ENCODE measurements at regions of chr7 and their contacts with region 1.

Region 1: DNA sequence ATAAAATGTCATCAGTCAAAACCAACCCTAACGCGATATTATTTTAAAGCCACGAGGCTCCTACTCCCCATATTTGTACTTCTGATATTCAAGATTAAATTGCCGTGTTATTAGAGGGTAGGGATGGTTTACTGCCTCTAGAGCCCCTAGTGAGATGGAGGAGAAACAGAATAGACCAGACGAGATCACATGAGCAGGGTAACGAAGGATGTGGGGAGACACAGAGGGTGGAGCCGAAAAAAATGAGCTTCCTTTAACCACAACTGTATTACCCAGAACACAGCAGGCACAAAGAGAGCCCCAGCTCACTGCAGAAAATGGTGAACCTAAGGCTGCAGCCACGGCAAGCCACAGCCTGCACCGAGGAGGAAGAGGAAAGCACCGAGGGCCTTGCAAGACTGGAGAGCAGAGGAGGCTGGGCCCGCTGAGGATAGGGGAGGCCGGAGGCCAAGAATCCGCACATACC is 14.3 kb downstream of the ZC3HAV1 start:
- DNase-seq: peak; percentile 57 to 96 (median 82)
- ATAC-seq: peak; percentile 84
- H3K4me3 ChIP-seq: peak overlapping the region; percentile 34 to 53
- H3K4me3 Mint-ChIP-seq: peak overlapping the region; percentile 84
- H3K27ac ChIP-seq: peak overlapping the region; percentile 61 to 76
- H3K27ac Mint-ChIP-seq: peak overlapping the region; percentile 95
- H3K4me1 ChIP-seq: peaks cover 82% of the 10 kb centered on the region
- H3K4me1 Mint-ChIP-seq: peaks cover 86% of the 10 kb centered on the region
- H3K27me3 ChIP-seq: no peaks in the 10 kb centered on the region
- H3K27me3 Mint-ChIP-seq: no peaks in the 10 kb centered on the region
- CTCF ChIP-seq: no peak

Region 2: GRCh38 chr7:139109188-139109982 is 14.2 kb after region 1 on chr7 and contains the start of gene ZC3HAV1:
- CTCF ChIA-PET with region 1: interaction called, 25 read pairs
- POLR2A ChIA-PET with region 1: interaction called, 93 read pairs
- intact Hi-C with region 1: loop called (anchors 1 to 2 kb)
- DNase-seq: peak; percentile 78 to 97 (median 89)
- ATAC-seq: peak; percentile 87
- H3K4me3 ChIP-seq: peak within 1 kb of the TSS; percentile 81 to 99
- H3K4me3 Mint-ChIP-seq: peak within 1 kb of the TSS; percentile 96
- H3K27ac ChIP-seq: peak within 1 kb of the TSS; percentile 97 to 98
- H3K27ac Mint-ChIP-seq: peak within 1 kb of the TSS; percentile 99
- H3K4me1 ChIP-seq: peaks cover 18% of the 10 kb centered on the region
- H3K4me1 Mint-ChIP-seq: peaks cover 42% of the 10 kb centered on the region
- H3K27me3 ChIP-seq: no peaks in the 10 kb centered on the region
- H3K27me3 Mint-ChIP-seq: no peaks in the 10 kb centered on the region
- CTCF ChIP-seq: no peak
- total RNA-seq, gene ZC3HAV1: 194 to 198 TPM

Region 3: DNA sequence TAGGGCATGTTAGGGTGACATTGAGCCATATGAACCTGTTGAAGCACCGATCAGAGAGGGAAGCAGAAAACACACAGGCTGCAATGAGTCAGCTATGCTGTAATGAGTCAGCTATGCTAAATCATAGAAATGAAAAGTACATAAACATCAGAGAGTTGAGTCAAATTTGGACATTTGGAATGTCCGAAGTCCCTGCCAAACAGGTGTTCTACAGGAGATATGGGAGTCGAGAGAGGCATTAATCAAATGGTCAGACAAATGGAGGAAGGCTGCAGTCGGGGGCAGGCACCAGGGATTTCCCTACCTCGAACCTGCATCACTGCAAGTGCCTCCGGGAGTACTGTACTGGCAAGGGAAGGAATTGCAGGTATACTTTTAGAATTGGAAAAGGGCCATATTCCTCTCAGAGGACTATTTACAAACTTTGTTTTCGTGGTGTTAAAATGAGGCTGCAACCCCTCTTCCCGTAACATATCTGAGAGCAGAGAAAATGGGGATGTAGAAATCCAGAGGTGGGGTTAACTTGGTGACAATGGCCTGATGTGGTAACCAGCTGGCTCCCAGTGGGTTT is 23.1 kb after region 1 on chr7:
- CTCF ChIA-PET with region 1: interaction called, 7 read pairs
- POLR2A ChIA-PET with region 1: interaction called, 13 read pairs
- intact Hi-C with region 1: no loop called
- DNase-seq: peak in 1 of 9 experiments; percentile 21
- ATAC-seq: no peak
- H3K4me3 ChIP-seq: peak overlapping the region in 1 of 2 experiments; percentile 33
- H3K4me3 Mint-ChIP-seq: peak overlapping the region; percentile 43
- H3K27ac ChIP-seq: peak overlapping the region in 1 of 2 experiments; percentile 38
- H3K27ac Mint-ChIP-seq: peak overlapping the region; percentile 88
- H3K4me1 ChIP-seq: peaks cover 27% of the 10 kb centered on the region
- H3K4me1 Mint-ChIP-seq: peaks cover 36% of the 10 kb centered on the region
- H3K27me3 ChIP-seq: no peaks in the 10 kb centered on the region
- H3K27me3 Mint-ChIP-seq: no peaks in the 10 kb centered on the region
- CTCF ChIP-seq: no peak

Region 4: DNA sequence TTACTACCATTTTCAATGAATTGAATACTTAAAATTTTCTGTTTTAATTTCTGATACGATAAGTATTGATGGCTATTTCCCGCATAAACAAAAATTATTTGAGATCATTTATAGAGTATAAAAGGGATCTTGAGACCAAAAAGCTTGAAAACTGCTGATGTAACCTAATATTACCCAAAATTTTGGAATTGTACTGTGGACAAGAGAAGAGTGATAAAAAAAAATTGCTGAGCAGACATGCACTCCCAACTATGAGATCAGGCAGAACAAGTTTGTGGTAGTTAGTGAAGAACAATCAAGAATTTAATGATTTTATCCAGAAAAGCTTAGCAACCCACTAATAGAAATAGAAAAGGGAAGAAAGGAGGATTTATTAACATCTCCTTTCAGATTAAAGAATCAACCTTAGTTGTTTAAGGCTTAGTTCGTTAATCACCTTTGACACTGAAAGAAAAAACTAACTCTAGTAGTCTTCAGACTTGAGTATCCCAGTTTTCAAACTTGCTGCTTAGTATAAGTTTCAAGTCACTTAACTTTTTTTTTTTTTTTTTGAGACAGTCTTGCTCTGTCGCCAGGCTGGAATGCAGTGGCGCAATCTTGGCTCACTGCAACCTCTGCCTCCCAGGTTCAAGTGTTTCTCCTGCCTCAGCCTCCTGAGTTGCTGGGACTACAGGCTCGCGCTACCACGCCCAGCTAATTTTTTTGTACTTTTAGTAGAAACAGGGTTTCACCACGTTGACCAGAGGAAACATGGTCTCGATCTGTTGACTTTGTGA is 64.9 kb after region 1 on chr7:
- CTCF ChIA-PET with region 1: no interaction called
- POLR2A ChIA-PET with region 1: no interaction called
- intact Hi-C with region 1: no loop called
- DNase-seq: no peak
- ATAC-seq: no peak
- H3K4me3 ChIP-seq: no peak overlapping the region
- H3K4me3 Mint-ChIP-seq: no peak overlapping the region
- H3K27ac ChIP-seq: no peak overlapping the region
- H3K27ac Mint-ChIP-seq: no peak overlapping the region
- H3K4me1 ChIP-seq: no peaks in the 10 kb centered on the region
- H3K4me1 Mint-ChIP-seq: no peaks in the 10 kb centered on the region
- H3K27me3 ChIP-seq: no peaks in the 10 kb centered on the region
- H3K27me3 Mint-ChIP-seq: no peaks in the 10 kb centered on the region
- CTCF ChIP-seq: no peak

Measured in CD8-positive, alpha-beta T cell (primary cell).